ENCODE measurements at regions of chr10 and their contacts with region 1.

Region 1: DNA sequence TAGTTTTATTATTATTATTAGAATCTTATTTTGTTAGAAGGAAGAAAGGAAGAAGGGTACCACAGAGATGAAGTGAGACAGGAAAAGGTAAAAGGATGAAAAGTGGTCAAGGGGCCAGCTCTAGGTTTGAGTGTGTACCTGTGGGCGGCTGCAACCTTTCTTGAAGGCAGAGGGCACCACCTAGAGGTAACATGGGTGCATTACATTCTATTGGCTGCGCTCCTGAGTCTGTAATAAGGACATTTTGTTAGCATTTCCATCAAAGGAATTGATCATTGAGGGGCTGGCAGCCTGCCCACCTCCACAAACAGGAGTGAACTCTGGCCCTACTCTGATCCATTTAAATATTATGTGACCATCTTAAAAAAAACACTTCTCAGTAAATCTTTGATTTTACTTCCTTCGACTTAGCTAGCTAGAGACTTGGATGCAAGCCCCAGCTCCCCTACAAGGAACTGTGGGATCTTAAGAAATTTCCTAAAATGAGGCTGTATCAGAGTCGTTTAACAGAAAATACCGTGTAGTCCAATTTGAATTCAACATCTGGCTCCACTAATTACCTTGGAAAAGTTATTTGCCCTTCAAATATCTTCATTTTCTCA is 610.4 kb downstream of the IPMK start:
- DNase-seq: peak; percentile 47
- H3K4me3 Mint-ChIP-seq: no peak overlapping the region
- H3K27ac Mint-ChIP-seq: no peak overlapping the region
- H3K4me1 Mint-ChIP-seq: no peaks in the 10 kb centered on the region
- H3K27me3 Mint-ChIP-seq: no peaks in the 10 kb centered on the region

Region 2: DNA sequence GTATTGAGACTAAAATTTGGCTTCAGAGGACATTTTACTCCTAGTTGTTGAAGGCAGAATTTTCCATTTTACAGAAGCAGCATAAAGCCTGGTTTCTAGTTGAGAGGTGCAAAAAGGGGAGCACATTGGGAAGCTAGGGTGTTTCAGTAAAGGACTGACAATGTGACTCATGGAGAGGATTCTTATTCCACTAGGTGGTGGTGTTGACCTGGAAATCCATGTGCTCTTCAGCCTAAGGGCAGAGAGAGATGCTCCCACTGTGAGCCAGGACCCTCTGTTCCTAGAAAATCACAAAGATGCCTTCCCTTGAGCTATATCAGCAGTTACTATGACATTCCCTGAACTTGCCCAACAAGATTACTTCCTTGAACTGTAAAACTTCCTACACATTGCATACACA is 77.3 kb before region 1 on chr10:
- CTCF ChIA-PET with region 1: interaction called, 3 read pairs
- intact Hi-C with region 1: loop called (anchors 5 kb)
- DNase-seq: no peak
- H3K4me3 Mint-ChIP-seq: no peak overlapping the region
- H3K27ac Mint-ChIP-seq: no peak overlapping the region
- H3K4me1 Mint-ChIP-seq: no peaks in the 10 kb centered on the region
- H3K27me3 Mint-ChIP-seq: no peaks in the 10 kb centered on the region